IMR-90 (cell line): ENCODE measurements at regions of chr1 and their contacts with region 1.

Region 1: GRCh38 chr1:97668945-97669344 is 251.9 kb downstream of the DPYD start:
- DNase-seq: peak; percentile 61
- ATAC-seq: peak; percentile 73
- H3K4me3 ChIP-seq: no peak overlapping the region
- H3K27ac ChIP-seq: no peak overlapping the region
- H3K4me1 ChIP-seq: no peaks in the 10 kb centered on the region
- H3K27me3 ChIP-seq: no peaks in the 10 kb centered on the region
- CTCF ChIP-seq: peak; percentile 27
- POLR2A ChIP-seq: no peak
- RAD21 ChIP-seq: peak; percentile 25; the same call in 1 of the 2 replicates

Region 2: GRCh38 chr1:97097466-97097865 is 571.5 kb before region 1 on chr1:
- CTCF ChIA-PET with region 1: no interaction called
- POLR2A ChIA-PET with region 1: no interaction called
- dilution Hi-C with region 1: no loop called
- in situ Hi-C with region 1: no loop called
- intact Hi-C with region 1: no loop called
- DNase-seq: no peak
- ATAC-seq: no peak
- H3K4me3 ChIP-seq: no peak overlapping the region
- H3K27ac ChIP-seq: no peak overlapping the region
- H3K4me1 ChIP-seq: peaks cover 4% of the 10 kb centered on the region; the same call in 1 of the 2 replicates
- H3K27me3 ChIP-seq: no peaks in the 10 kb centered on the region
- CTCF ChIP-seq: no peak
- POLR2A ChIP-seq: no peak
- RAD21 ChIP-seq: no peak

Region 3: DNA sequence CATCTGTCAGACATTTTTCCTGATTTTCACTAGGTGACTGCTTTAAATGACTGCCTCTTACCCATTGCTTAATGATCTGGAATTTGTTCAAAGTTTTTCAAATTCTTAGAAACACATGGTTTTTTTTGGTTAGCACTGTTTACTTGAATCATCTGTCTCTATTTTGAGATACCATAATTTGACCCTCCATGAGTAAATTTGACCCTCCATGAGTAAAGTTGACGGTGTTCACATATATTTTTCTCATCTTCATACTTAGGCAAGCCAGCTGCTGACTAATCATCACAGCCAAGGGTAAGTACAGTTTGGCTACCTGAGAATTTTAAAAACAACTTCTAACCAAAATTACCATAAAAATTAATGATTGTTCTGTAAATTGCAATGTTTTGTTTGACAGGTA is 360.8 kb before region 1 on chr1:
- CTCF ChIA-PET with region 1: no interaction called
- POLR2A ChIA-PET with region 1: no interaction called
- dilution Hi-C with region 1: no loop called
- in situ Hi-C with region 1: no loop called
- intact Hi-C with region 1: loop called (anchors 10 kb)
- DNase-seq: peak; percentile 81
- ATAC-seq: no peak; the same call in 1 of the 2 replicates
- H3K4me3 ChIP-seq: no peak overlapping the region
- H3K27ac ChIP-seq: no peak overlapping the region
- H3K4me1 ChIP-seq: no peaks in the 10 kb centered on the region; the same call in 1 of the 2 replicates
- H3K27me3 ChIP-seq: no peaks in the 10 kb centered on the region
- CTCF ChIP-seq: no peak
- POLR2A ChIP-seq: no peak
- RAD21 ChIP-seq: no peak

Region 4: DNA sequence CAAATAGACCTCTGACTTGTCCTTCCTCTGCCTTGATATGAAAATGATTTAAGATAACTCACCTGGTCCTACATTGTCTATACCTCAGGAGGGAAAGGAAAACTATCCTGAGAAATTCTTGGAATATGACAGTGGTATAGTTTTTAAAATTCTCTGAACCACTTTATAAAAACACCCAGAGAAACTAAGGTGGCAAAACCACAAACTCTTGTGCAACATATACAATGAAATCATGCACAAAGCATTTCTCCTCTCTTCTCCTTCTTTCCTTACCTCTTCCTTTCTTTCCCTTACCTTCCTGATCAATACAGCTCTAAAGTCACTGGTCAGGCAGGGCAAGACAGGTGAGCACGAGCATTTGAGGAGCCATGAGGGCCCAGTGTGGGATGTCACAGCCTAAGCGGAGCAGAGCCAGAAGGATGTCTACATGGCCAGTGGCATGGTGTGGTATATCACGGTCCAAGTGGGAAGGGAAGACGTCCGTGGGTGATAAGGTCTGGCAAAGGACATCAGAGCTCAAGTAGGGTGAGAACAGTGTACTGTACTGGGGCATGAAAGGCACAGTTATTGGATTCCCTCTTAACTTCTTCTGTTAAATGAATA is 291.4 kb before region 1 on chr1:
- CTCF ChIA-PET with region 1: no interaction called
- POLR2A ChIA-PET with region 1: no interaction called
- dilution Hi-C with region 1: no loop called
- in situ Hi-C with region 1: no loop called
- intact Hi-C with region 1: no loop called
- DNase-seq: no peak
- ATAC-seq: no peak; the same call in 1 of the 2 replicates
- H3K4me3 ChIP-seq: no peak overlapping the region
- H3K27ac ChIP-seq: no peak overlapping the region
- H3K4me1 ChIP-seq: peaks cover 9% of the 10 kb centered on the region; the same call in 1 of the 2 replicates
- H3K27me3 ChIP-seq: no peaks in the 10 kb centered on the region
- CTCF ChIP-seq: no peak
- POLR2A ChIP-seq: no peak
- RAD21 ChIP-seq: no peak

Region 5: DNA sequence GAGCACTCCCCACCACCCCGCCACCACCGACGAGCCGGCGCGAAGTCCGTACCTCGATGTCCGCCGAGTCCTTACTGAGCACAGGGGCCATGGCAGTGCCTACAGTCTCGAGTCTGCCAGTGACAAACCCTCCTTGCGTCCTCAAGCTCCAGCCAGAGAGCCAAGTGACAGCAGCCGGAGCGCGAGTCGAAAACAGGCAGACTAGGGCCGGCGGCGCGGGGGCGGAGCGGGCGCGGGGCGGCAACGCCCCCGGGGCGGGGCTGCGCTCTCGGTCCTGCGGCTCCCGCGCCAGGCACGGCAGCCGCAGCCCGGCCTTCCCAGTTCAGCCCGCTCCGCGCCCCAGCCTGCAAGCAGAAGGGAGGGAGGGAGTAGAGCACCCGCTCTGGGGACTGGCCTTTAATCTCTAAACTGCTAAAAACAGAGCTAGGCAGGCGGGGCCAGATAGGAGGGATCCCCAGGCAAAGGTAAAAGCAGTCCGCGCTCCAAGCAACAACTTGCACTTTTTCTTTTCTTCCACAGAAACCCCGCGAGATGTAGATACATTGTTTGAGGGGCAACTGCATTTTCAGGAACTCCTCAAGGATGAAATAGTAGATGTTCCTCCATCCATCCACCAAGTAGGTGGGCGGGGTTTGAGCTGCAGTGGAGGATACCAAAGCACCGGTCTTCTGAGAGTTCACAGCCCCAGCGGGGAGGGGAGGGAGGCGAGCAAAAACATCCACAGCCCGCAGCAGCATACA is 252.1 kb after region 1 on chr1 and contains the start of gene DPYD:
- CTCF ChIA-PET with region 1: no interaction called
- POLR2A ChIA-PET with region 1: no interaction called
- dilution Hi-C with region 1: no loop called
- in situ Hi-C with region 1: no loop called
- intact Hi-C with region 1: no loop called
- DNase-seq: peak; percentile 85
- ATAC-seq: peak; percentile 98
- H3K4me3 ChIP-seq: peak within 1 kb of the TSS; percentile 92
- H3K27ac ChIP-seq: peak within 1 kb of the TSS; percentile 81
- H3K4me1 ChIP-seq: 0 out of 2 replicates have a peak, but pooled peaks cover 2% of the 10 kb centered on the region
- H3K27me3 ChIP-seq: no peaks in the 10 kb centered on the region
- CTCF ChIP-seq: no peak
- POLR2A ChIP-seq: peak; percentile 70; the same call in 1 of the 2 replicates
- RAD21 ChIP-seq: no peak
- total RNA-seq, gene DPYD: 47.3 and 58.3 TPM in 2 replicates